Activated CD4-positive, alpha-beta memory T cell treated with anti-CD3 and anti-CD28 coated beads for 36 hours (primary cell): ENCODE measurements at regions of chr6 and their contacts with region 1.

Region 1: DNA sequence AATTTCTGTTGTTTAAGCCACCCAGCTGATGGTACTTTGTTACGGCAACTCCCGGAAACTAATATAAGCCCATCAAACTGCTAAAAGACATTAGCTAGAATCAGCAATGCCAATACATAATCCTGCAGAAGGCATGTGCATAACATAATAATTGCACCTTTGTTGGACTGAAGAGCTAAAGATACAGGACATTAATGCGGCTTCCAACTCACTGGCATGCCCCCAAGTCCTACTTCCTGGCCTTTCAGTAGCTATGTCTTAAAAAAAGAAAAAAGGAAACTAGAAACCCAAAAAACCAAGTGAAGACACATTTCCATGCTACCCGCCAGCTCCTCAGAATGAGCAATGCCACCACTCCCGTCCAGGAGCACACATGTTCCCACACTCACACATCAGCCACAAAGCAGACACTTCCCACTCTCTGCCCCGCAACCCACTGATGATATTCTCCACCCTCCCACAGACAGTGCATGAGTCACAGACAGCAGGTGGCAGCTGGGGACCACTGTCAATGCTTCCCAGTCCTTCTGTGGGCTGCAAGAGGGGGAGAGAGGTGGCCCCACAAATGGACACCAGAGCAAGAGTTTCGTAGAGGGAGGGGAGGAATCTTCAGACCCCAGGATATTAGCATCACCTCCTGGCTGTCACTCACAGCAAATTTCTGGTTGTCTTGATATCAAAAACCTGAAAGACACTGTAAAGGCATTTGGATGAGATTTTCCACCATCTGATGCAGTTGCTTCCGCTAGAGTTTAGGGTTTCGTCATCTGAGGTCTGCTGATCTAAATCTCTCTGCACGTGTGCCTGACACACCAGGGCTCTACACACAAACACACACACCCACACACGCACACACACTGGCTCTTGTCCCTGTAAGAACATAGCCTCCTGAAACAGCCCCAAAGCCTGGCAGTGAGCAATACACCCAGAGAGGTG is 32.8 kb downstream of the GFOD1 start:
- DNase-seq: peak; percentile 86
- H3K4me3 Mint-ChIP-seq: peak overlapping the region; percentile 28
- H3K27ac Mint-ChIP-seq: peak overlapping the region; percentile 89
- H3K4me1 Mint-ChIP-seq: peaks cover 43% of the 10 kb centered on the region
- H3K27me3 Mint-ChIP-seq: no peaks in the 10 kb centered on the region

Region 2: GRCh38 chr6:13302751-13303667 is 151.5 kb before region 1 on chr6:
- CTCF ChIA-PET with region 1: no interaction called
- POLR2A ChIA-PET with region 1: no interaction called
- intact Hi-C with region 1: loop called (anchors 1 kb)
- DNase-seq: peak; percentile 74
- H3K4me3 Mint-ChIP-seq: peak overlapping the region; percentile 24
- H3K27ac Mint-ChIP-seq: peak overlapping the region; percentile 83
- H3K4me1 Mint-ChIP-seq: peaks cover 27% of the 10 kb centered on the region
- H3K27me3 Mint-ChIP-seq: no peaks in the 10 kb centered on the region

Region 3: DNA sequence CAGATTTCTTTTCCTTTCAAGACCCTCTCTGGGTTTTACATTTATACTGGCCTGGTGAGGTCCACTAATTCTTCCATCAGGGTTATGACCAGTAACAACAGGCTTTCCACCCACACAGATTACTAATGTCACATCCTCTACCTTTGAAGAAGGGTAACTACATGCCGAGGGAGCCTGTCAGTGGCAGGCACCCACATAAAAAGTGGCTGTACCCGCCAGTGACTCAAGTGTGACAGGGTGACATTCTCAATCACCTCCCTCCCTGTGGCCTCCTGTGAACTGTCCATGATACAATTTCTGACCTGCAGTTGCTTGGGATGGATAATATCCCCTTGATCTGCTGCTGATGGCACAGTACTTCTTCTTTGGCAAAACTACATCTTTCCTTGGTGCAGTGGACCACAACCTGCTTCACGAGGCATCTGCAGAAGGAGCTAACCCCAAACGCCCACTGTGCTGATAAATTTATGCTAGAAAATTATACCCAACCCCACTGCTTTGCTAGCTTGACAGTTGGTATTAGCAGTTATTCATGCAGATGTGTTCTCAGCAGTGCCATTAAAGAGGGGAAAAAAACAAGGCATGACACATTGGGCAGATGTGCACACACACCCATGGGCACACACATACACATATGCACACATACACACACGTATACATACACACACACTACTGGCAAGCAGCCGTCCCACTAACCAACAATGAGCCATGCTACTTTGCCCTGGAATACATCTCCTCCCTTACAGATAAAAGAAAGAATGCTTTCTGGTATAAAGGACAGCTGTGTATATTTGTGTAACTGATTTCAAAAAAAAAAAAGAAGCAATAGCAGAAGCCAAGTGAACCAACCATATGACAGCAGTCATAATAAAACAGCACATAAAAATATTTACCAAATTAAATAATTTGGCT is 12.0 kb after region 1 on chr6:
- CTCF ChIA-PET with region 1: interaction called, 4 read pairs
- POLR2A ChIA-PET with region 1: interaction called, 3 read pairs
- intact Hi-C with region 1: loop called (anchors 1 kb)
- DNase-seq: peak; percentile 81
- H3K4me3 Mint-ChIP-seq: peak overlapping the region; percentile 42
- H3K27ac Mint-ChIP-seq: peak overlapping the region; percentile 86
- H3K4me1 Mint-ChIP-seq: peaks cover 34% of the 10 kb centered on the region
- H3K27me3 Mint-ChIP-seq: no peaks in the 10 kb centered on the region

Region 4: GRCh38 chr6:13487122-13488014 is 32.8 kb after region 1 on chr6 and contains the start of gene GFOD1:
- CTCF ChIA-PET with region 1: interaction called, 5 read pairs
- POLR2A ChIA-PET with region 1: interaction called, 6 read pairs
- intact Hi-C with region 1: loop called (anchors 1 kb)
- DNase-seq: peak; percentile 82
- H3K4me3 Mint-ChIP-seq: peak within 1 kb of the TSS; percentile 73
- H3K27ac Mint-ChIP-seq: peak within 1 kb of the TSS; percentile 15
- H3K4me1 Mint-ChIP-seq: peaks cover 29% of the 10 kb centered on the region
- H3K27me3 Mint-ChIP-seq: peaks cover 13% of the 10 kb centered on the region
- total RNA-seq, gene GFOD1: 2.3 to 2.4 TPM